ENCODE measurements at regions of chr7 and their contacts with region 1.

Region 1: GRCh38 chr7:122803323-122803722 is 82.9 kb downstream of the CADPS2 start:
- DNase-seq: peak; percentile 74
- H3K4me3 ChIP-seq: no peak overlapping the region
- H3K27ac ChIP-seq: peak overlapping the region; percentile 46
- H3K4me1 ChIP-seq: peaks cover 16% of the 10 kb centered on the region
- H3K27me3 ChIP-seq: no peaks in the 10 kb centered on the region
- CTCF ChIP-seq: peak; percentile 35
- POLR2A ChIP-seq: no peak

Region 2: GRCh38 chr7:122790132-122790531 is 13.2 kb before region 1 on chr7:
- CTCF ChIA-PET with region 1: interaction called, 21 read pairs
- POLR2A ChIA-PET with region 1: no interaction called
- dilution Hi-C with region 1: no loop called
- intact Hi-C with region 1: no loop called
- DNase-seq: no peak
- H3K4me3 ChIP-seq: no peak overlapping the region
- H3K27ac ChIP-seq: no peak overlapping the region
- H3K4me1 ChIP-seq: no peaks in the 10 kb centered on the region
- H3K27me3 ChIP-seq: no peaks in the 10 kb centered on the region
- CTCF ChIP-seq: no peak
- POLR2A ChIP-seq: no peak

Region 3: DNA sequence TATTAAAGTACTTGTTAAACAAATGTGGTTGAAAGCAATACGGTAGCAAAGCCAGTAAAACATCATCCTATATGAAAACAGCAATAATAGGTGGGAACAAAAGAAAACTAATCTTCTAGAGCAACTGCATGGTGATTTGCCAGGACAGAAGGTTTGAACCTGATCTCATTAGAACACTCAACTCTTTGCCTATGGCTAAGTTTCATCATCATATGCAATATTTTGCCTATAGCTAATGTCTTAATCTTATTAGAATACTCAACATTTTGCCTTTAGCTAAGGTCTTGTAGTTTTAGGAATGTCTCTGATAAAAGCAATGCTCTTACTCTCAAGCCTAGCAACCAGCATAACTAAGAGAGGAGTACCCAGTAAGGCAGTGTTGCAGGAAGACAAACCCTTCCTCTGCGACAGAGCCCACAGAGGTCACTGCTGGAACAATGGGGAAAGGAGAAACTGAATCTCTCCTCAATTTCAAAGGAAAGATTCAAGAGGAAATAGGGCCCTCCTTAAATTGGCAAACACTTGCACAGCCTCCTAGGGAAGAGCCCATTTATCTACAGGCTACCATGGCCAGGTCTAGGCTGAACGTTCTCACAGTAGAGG is 44.6 kb after region 1 on chr7:
- CTCF ChIA-PET with region 1: interaction called, 24 read pairs
- POLR2A ChIA-PET with region 1: no interaction called
- dilution Hi-C with region 1: no loop called
- intact Hi-C with region 1: no loop called
- DNase-seq: peak; percentile 32
- H3K4me3 ChIP-seq: no peak overlapping the region
- H3K27ac ChIP-seq: no peak overlapping the region
- H3K4me1 ChIP-seq: peaks cover 33% of the 10 kb centered on the region
- H3K27me3 ChIP-seq: no peaks in the 10 kb centered on the region
- CTCF ChIP-seq: no peak
- POLR2A ChIP-seq: no peak

Region 4: DNA sequence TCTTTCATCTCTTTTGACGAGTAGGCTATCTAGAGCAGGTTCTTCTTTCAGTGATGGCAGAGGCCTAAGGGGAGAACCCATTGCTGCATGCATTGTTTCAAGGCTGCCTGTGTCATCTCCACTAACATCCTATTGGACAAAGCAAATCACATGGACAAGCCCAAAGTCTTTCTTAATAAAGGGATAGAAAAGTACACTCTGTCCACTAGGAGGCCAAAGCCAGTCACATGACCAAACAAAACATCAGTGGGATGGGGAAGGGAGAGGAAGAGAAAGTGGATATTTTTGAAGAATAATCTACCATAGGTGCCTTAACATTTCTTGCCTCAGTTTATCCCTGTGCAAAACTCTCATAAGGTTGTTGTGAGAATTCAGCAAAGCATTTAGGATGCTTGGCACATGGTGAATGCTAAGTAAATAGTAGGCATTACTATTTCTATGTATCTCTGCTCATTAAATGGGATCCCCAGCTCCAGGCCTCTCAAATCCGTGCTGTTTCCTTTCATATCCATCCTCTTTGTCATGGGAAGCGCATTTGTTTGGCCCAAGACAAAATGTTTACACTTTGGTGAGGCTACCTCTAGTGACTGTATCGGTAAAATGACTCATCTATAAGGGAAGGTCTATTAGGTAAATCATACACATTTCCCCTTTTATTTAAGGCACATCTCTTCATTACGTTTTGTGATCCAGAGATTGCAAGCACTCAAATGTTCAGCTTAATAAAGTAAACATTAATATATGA is 99.6 kb after region 1 on chr7:
- CTCF ChIA-PET with region 1: no interaction called
- POLR2A ChIA-PET with region 1: no interaction called
- dilution Hi-C with region 1: no loop called
- intact Hi-C with region 1: no loop called
- DNase-seq: no peak
- H3K4me3 ChIP-seq: no peak overlapping the region
- H3K27ac ChIP-seq: no peak overlapping the region
- H3K4me1 ChIP-seq: peaks cover 10% of the 10 kb centered on the region
- H3K27me3 ChIP-seq: no peaks in the 10 kb centered on the region
- CTCF ChIP-seq: peak; percentile 2 to 22
- POLR2A ChIP-seq: no peak

Region 5: DNA sequence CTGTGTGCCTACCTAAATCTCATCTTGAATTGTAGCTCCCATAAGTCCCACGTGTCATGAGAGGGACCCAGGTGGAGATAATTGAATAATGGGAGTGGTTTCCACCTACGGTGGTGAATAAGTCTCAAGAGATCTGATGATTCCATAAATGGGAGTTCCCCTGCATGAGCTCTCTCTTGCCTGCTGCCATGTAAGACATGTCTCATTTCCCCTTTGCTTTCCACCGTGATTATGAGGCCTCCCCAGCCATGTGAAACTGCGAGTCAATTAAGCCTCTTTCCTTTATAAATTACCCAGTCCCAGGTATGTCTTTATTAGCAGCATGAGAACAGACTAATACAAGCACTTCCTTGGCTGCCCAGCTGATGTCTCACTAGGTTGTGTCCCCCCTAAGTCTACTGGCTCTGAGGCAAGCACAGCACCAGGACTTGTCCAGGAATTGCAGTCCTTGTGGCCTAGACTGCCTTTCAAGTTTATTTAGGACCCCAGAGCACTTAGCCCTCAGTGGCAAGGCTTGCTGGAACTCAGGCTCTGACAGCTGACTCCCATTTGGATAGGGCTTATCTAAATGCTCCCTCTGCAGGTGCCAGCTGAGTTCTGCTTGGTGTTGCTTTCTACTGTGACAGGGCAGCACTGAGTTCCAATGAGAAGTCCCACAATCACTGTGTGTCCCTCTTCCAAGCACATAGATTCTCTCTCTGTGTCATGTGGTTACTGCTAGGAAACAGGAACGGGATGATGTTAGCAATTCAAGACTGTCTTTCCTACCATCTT is 251.2 kb after region 1 on chr7:
- CTCF ChIA-PET with region 1: interaction called, 12 read pairs
- POLR2A ChIA-PET with region 1: no interaction called
- dilution Hi-C with region 1: no loop called
- intact Hi-C with region 1: no loop called
- DNase-seq: peak; percentile 55
- H3K4me3 ChIP-seq: no peak overlapping the region
- H3K27ac ChIP-seq: no peak overlapping the region
- H3K4me1 ChIP-seq: no peaks in the 10 kb centered on the region
- H3K27me3 ChIP-seq: no peaks in the 10 kb centered on the region
- CTCF ChIP-seq: peak in 1 of 2 donors; percentile 44
- POLR2A ChIP-seq: no peak

Measured in endothelial cell of umbilical vein (primary cell).